Activated B cell treated with CpG ODN at 0.5 μM for 24 hours (primary cell): ENCODE measurements at regions of chrX and their contacts with region 1.

Region 1: GRCh38 chrX:11770320-11770719 is 12.3 kb downstream of the MSL3 start:
- DNase-seq: no peak
- ATAC-seq: peak; percentile 65
- H3K4me3 Mint-ChIP-seq: no peak overlapping the region
- H3K27ac Mint-ChIP-seq: peak overlapping the region; percentile 63
- H3K4me1 Mint-ChIP-seq: peaks cover 23% of the 10 kb centered on the region
- H3K27me3 Mint-ChIP-seq: no peaks in the 10 kb centered on the region
- CTCF ChIP-seq: no peak

Region 2: DNA sequence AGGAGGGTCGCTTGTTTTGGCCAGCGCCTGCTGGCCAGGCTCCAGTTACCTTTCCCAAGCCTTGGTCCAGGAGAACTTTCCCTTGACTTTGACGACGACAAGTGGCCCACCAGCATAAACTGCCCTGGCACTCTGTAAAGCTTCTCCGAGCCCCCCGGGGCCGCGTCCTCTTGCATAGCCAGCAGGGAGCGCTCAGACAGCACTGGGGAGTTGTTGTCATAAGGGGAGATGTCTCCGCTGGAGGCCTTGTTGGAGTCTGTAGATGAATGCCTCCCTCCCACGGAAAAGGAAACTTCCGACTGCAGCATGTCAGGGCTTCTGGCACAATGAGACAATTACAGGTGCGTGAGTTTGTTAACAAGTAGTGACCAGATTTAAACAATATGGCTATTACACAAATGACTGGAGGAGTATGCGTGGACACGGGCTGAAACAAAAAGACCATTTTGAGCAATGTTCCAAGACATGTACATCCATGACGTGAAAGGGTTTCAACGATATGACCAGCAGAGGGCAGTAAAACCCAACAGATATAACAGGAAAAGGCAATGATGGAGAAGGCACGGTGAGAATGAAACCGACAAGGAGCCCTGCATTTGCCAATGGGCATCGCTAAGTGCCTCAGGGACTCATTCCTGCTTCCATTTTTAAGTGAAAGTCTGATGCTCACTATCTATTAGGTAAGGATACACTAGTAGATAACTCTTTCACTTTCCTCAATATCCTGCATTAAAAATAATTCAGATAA is 626.2 kb before region 1 on chrX:
- CTCF ChIA-PET with region 1: no interaction called
- POLR2A ChIA-PET with region 1: no interaction called
- intact Hi-C with region 1: loop called (anchors 1 kb)
- DNase-seq: no peak
- ATAC-seq: peak; percentile 65
- H3K4me3 Mint-ChIP-seq: no peak overlapping the region
- H3K27ac Mint-ChIP-seq: no peak overlapping the region
- H3K4me1 Mint-ChIP-seq: peaks cover 2% of the 10 kb centered on the region
- H3K27me3 Mint-ChIP-seq: no peaks in the 10 kb centered on the region
- CTCF ChIP-seq: no peak

Region 3: DNA sequence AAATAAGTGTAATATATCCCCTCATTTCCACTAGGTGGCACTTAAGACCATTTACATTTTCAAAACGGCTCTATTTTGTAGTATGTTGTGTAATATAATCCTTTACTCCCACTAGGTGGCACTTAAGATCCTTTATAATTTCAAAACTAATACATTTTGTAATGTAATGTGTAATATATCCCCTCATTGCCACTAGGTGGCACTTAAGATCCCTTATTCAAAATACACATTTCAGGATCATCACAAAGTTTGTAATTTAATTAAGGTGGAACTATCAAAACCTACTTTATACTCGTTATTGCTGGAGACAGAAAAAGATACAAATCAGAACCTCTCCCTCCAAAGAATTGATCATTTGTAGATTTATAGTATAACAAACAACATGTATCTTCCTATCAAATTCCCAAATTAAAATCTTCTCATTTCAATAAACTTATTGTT is 237.1 kb before region 1 on chrX:
- CTCF ChIA-PET with region 1: interaction called, 6 read pairs
- POLR2A ChIA-PET with region 1: no interaction called
- intact Hi-C with region 1: loop called (anchors 1 kb)
- DNase-seq: no peak
- ATAC-seq: peak; percentile 99
- H3K4me3 Mint-ChIP-seq: no peak overlapping the region
- H3K27ac Mint-ChIP-seq: no peak overlapping the region
- H3K4me1 Mint-ChIP-seq: peaks cover 3% of the 10 kb centered on the region
- H3K27me3 Mint-ChIP-seq: no peaks in the 10 kb centered on the region
- CTCF ChIP-seq: peak; percentile 44

Region 4: DNA sequence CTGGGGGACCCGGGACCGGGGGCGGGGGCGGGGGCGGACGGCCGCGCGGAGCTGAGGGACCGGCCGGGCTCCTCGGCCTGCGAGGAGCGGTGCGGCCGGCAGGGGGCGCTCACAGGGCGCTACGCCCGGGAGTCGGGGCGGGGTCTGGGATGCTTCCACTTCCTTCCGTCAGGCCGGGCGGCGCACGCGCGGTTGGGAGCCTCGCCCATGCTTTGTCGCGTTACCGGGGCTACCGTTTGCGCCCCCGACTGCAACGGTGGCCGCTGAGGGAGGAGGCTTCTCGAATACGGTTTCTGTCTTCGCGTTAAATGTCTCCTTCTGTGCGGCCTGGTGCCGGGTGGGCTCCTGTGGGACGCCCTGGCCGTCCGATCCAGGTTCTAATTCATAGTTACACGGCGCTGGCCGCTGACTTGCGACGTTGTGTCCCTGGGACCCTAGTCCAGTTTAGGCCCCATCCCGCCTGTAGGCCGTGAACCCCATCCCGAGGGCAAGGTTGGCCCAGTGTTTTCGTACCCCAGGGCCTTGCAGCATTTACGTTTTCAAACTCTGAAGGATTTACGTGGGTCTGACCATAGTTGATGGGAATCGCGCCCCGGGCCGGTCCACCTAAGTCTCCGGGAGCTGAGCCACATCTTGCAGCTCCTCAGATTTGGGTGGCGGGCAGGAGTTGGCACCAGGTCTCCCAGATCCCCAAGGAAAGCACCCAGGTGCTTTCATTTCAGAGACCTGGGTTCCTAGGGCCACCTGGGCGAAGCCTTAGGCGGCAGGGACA is 11.7 kb before region 1 on chrX:
- CTCF ChIA-PET with region 1: interaction called, 9 read pairs
- POLR2A ChIA-PET with region 1: interaction called, 11 read pairs
- intact Hi-C with region 1: loop called (anchors 1 kb)
- DNase-seq: peak; percentile 81
- ATAC-seq: peak; percentile 65
- H3K4me3 Mint-ChIP-seq: peak overlapping the region; percentile 94
- H3K27ac Mint-ChIP-seq: peak overlapping the region; percentile 95
- H3K4me1 Mint-ChIP-seq: peaks cover 35% of the 10 kb centered on the region
- H3K27me3 Mint-ChIP-seq: no peaks in the 10 kb centered on the region
- CTCF ChIP-seq: no peak

Region 5: DNA sequence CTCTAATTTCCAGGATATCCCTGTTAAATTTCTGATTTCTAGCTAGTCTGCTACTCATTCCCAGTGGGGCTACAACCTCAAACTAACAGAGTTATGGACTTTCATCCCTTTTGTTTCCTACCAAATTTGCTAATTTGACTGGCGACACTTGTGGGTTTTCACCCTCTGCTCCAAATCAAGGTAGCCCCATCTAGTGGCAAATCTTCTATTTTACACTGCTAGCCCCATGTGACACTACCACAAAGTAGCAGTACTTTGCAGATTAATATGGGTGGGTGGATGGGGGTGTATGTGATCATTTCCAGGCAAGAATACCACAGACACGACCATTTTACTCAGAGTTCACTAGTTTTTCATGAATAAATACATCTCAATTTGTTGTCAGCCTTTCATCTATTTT is 138.1 kb after region 1 on chrX:
- CTCF ChIA-PET with region 1: interaction called, 3 read pairs
- POLR2A ChIA-PET with region 1: no interaction called
- intact Hi-C with region 1: loop called (anchors 5 kb)
- DNase-seq: no peak
- ATAC-seq: peak; percentile 56
- H3K4me3 Mint-ChIP-seq: no peak overlapping the region
- H3K27ac Mint-ChIP-seq: no peak overlapping the region
- H3K4me1 Mint-ChIP-seq: no peaks in the 10 kb centered on the region
- H3K27me3 Mint-ChIP-seq: no peaks in the 10 kb centered on the region
- CTCF ChIP-seq: no peak

Region 6: GRCh38 chrX:12128017-12128416 is 357.7 kb after region 1 on chrX:
- CTCF ChIA-PET with region 1: no interaction called
- POLR2A ChIA-PET with region 1: no interaction called
- intact Hi-C with region 1: no loop called
- DNase-seq: no peak
- ATAC-seq: no peak
- H3K4me3 Mint-ChIP-seq: no peak overlapping the region
- H3K27ac Mint-ChIP-seq: no peak overlapping the region
- H3K4me1 Mint-ChIP-seq: no peaks in the 10 kb centered on the region
- H3K27me3 Mint-ChIP-seq: peaks cover 4% of the 10 kb centered on the region
- CTCF ChIP-seq: no peak

Region 7: GRCh38 chrX:12672367-12673106 is 902.2 kb after region 1 on chrX:
- CTCF ChIA-PET with region 1: no interaction called
- POLR2A ChIA-PET with region 1: no interaction called
- intact Hi-C with region 1: no loop called
- DNase-seq: no peak
- ATAC-seq: no peak
- H3K4me3 Mint-ChIP-seq: no peak overlapping the region
- H3K27ac Mint-ChIP-seq: no peak overlapping the region
- H3K4me1 Mint-ChIP-seq: no peaks in the 10 kb centered on the region
- H3K27me3 Mint-ChIP-seq: no peaks in the 10 kb centered on the region
- CTCF ChIP-seq: no peak